ENCODE measurements at regions of chr6 and their contacts with region 1.

Region 1: DNA sequence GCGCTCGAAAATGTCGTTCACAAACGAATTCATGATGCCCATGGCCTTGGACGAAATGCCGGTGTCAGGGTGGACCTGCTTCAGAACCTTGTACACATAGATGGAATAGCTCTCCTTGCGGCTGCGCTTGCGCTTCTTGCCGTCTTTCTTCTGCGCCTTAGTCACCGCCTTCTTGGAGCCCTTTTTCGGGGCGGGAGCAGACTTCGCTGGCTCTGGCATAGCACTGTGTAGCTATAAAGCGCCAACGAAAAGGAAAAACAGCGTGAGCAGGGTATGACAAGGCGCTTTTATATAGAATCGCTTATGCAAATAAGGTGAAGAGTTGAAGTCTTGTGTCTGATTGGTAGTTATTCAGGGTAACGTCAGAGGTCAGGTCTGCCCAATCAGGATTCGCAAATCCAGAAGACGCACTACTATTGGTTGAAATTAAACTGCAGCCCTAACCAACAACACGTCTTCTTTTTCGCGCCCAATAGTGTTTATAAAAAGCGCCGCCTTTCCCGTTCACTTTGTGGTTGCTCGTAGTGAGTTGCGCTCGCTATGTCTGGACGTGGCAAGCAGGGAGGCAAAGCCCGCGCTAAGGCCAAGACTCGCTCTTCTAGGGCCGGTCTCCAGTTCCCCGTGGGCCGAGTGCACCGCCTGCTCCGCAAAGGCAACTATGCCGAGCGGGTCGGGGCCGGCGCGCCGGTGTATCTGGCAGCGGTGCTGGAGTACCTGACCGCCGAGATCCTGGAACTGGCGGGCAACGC is 114.8 kb upstream of the PRSS16 start:
- DNase-seq: peak; percentile 99
- H3K4me3 Mint-ChIP-seq: no peak overlapping the region
- H3K27ac Mint-ChIP-seq: no peak overlapping the region
- H3K4me1 Mint-ChIP-seq: peaks cover 11% of the 10 kb centered on the region
- H3K27me3 Mint-ChIP-seq: no peaks in the 10 kb centered on the region
- CTCF ChIP-seq: no peak

Region 2: DNA sequence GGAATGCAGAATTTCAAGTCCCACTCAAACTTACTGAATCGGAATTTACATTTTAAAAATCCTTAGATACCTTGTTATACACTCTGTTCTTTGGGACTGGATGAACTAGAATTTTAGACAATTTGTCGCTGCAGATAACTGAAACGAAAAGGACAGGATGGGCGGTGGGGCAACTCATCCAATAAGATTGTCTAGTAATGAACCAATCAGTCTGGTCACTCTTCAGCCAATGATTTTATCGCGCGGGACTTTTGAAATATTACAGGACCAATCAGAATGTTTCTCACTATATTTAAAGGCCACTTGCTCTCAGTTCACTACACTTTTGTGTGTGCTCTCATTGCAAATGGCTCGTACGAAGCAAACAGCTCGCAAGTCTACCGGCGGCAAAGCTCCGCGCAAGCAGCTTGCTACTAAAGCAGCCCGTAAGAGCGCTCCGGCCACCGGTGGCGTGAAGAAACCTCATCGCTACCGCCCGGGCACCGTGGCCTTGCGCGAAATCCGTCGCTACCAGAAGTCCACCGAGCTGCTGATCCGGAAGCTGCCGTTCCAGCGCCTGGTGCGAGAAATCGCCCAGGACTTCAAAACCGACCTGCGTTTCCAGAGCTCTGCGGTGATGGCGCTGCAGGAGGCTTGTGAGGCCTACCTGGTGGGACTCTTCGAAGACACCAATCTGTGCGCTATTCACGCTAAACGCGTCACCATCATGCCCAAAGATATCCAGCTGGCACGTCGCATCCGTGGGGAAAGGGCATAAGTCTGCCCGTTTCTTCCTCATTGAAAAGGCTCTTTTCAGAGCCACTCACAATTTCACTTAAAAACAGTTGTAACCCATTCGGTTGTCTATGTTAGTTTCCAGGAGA is 1087.4 kb before region 1 on chr6:
- CTCF ChIA-PET with region 1: no interaction called
- POLR2A ChIA-PET with region 1: interaction called, 25 read pairs
- intact Hi-C with region 1: no loop called
- DNase-seq: peak; percentile 95
- H3K4me3 Mint-ChIP-seq: peak overlapping the region; percentile 80
- H3K27ac Mint-ChIP-seq: peak overlapping the region; percentile 86
- H3K4me1 Mint-ChIP-seq: peaks cover 16% of the 10 kb centered on the region
- H3K27me3 Mint-ChIP-seq: no peaks in the 10 kb centered on the region
- CTCF ChIP-seq: no peak

Region 3: GRCh38 chr6:26223650-26224546 is 908.8 kb before region 1 on chr6:
- CTCF ChIA-PET with region 1: no interaction called
- POLR2A ChIA-PET with region 1: interaction called, 20 read pairs
- intact Hi-C with region 1: no loop called
- DNase-seq: peak; percentile 91
- H3K4me3 Mint-ChIP-seq: no peak overlapping the region
- H3K27ac Mint-ChIP-seq: no peak overlapping the region
- H3K4me1 Mint-ChIP-seq: peaks cover 6% of the 10 kb centered on the region
- H3K27me3 Mint-ChIP-seq: no peaks in the 10 kb centered on the region
- CTCF ChIP-seq: no peak

Region 4: DNA sequence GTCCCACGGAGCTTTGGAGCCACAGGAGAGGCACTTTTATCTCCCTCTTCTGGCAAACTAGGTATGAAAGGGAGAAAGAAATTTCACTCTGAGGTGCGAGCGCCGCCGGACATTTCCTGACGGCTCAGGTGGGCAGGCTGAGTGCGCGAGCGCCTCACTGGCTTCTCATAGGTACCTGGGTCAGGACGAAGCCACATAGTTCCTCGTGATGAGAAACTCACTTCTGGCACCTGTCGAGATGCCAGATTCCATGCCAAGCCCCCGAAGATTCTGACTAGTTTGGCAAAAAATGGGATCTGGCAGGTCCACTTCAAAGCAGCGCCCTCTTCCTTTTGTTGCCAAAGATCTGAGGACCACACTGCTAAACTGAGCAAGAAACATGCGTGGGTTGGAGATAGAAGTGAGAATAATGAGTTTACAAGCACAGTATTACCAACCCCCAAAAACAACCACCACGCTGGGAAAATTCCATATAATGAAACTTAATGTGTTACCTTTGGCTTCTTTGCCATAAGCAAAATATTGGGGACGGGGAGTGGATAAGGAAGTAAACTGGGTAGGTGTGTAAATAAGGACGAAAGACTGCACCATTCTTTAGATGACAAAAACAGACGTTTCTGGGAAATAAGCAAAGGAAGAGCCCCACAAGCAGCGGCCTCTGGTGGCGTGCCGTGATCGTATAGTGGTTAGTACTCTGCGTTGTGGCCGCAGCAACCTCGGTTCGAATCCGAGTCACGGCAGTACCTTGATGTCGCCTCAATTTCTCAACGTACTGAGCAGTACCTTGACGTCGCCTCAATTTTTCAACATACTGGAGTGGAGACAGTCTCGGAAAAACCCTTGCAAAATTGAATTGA is 25.0 kb after region 1 on chr6:
- CTCF ChIA-PET with region 1: interaction called, 8 read pairs
- POLR2A ChIA-PET with region 1: interaction called, 621 read pairs
- intact Hi-C with region 1: loop called (anchors 1 kb)
- DNase-seq: peak; percentile 66
- H3K4me3 Mint-ChIP-seq: peak overlapping the region; percentile 80
- H3K27ac Mint-ChIP-seq: peak overlapping the region; percentile 53
- H3K4me1 Mint-ChIP-seq: peaks cover 29% of the 10 kb centered on the region
- H3K27me3 Mint-ChIP-seq: no peaks in the 10 kb centered on the region
- CTCF ChIP-seq: peak; percentile 31

Region 5: GRCh38 chr6:27825025-27825793 is 692.5 kb after region 1 on chr6:
- CTCF ChIA-PET with region 1: no interaction called
- POLR2A ChIA-PET with region 1: interaction called, 45 read pairs
- intact Hi-C with region 1: no loop called
- DNase-seq: no peak
- H3K4me3 Mint-ChIP-seq: peak overlapping the region; percentile 94
- H3K27ac Mint-ChIP-seq: peak overlapping the region; percentile 95
- H3K4me1 Mint-ChIP-seq: peaks cover 10% of the 10 kb centered on the region
- H3K27me3 Mint-ChIP-seq: no peaks in the 10 kb centered on the region
- CTCF ChIP-seq: no peak

Region 6: GRCh38 chr6:27864906-27865849 is 732.5 kb after region 1 on chr6:
- CTCF ChIA-PET with region 1: no interaction called
- POLR2A ChIA-PET with region 1: interaction called, 25 read pairs
- intact Hi-C with region 1: no loop called
- DNase-seq: peak; percentile 96
- H3K4me3 Mint-ChIP-seq: peak overlapping the region; percentile 91
- H3K27ac Mint-ChIP-seq: peak overlapping the region; percentile 97
- H3K4me1 Mint-ChIP-seq: no peaks in the 10 kb centered on the region
- H3K27me3 Mint-ChIP-seq: no peaks in the 10 kb centered on the region
- CTCF ChIP-seq: no peak